HCT116 (cell line): ENCODE measurements at regions of chr11 and their contacts with region 1.

Region 1: GRCh38 chr11:102929972-102930371 is 25.6 kb downstream of the MMP13 start:
- DNase-seq: no peak
- ATAC-seq: no peak
- H3K4me3 ChIP-seq: no peak overlapping the region
- H3K27ac ChIP-seq: no peak overlapping the region
- H3K4me1 ChIP-seq: no peaks in the 10 kb centered on the region
- H3K27me3 ChIP-seq: no peaks in the 10 kb centered on the region; the same call in 1 of the 2 replicates
- CTCF ChIP-seq: no peak
- POLR2A ChIP-seq: no peak
- RAD21 ChIP-seq: no peak

Region 2: DNA sequence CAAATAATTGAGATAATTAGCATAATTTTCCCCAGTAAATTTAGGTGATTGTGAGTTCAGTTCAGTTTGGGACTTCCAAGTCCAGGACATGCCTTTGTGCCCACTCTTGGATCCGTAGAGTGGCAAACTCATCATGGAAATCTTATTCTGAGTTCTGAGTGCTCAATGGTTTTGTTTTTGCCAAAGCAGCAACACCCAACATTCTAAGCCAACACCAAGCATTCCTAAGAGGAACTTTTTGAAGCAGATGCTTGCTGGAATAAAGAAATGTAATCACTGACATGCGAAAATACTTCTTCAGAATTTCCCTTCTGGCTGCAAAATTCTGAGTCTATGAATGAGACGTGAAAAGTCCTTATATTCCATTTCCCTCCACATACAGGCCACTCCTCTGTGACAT is 234.8 kb before region 1 on chr11:
- CTCF ChIA-PET with region 1: no interaction called
- POLR2A ChIA-PET with region 1: no interaction called
- RAD21 ChIA-PET with region 1: no interaction called
- intact Hi-C with region 1: no loop called
- DNase-seq: no peak
- ATAC-seq: no peak
- H3K4me3 ChIP-seq: no peak overlapping the region
- H3K27ac ChIP-seq: no peak overlapping the region
- H3K4me1 ChIP-seq: no peaks in the 10 kb centered on the region
- H3K27me3 ChIP-seq: no peaks in the 10 kb centered on the region
- CTCF ChIP-seq: no peak
- POLR2A ChIP-seq: no peak
- RAD21 ChIP-seq: no peak

Region 3: GRCh38 chr11:102940714-102941588 is 11.0 kb after region 1 on chr11:
- CTCF ChIA-PET with region 1: interaction called, 12 read pairs
- POLR2A ChIA-PET with region 1: no interaction called
- RAD21 ChIA-PET with region 1: no interaction called
- intact Hi-C with region 1: no loop called
- DNase-seq: peak; percentile 70
- ATAC-seq: peak; percentile 94
- H3K4me3 ChIP-seq: no peak overlapping the region
- H3K27ac ChIP-seq: no peak overlapping the region
- H3K4me1 ChIP-seq: peaks cover 0 to 9% of the 10 kb centered on the region in 2 experiments; a peak in 2 of 4 replicates
- H3K27me3 ChIP-seq: no peaks in the 10 kb centered on the region
- CTCF ChIP-seq: peak; percentile 66 to 88 (median 86)
- POLR2A ChIP-seq: no peak
- RAD21 ChIP-seq: peak; percentile 82